T-cell (primary cell): ENCODE measurements at regions of chr3 and their contacts with region 1.

Region 1: GRCh38 chr3:51498876-51499738 is 708 bp downstream of the DCAF1 start:
- DNase-seq: peak; percentile 44 to 85 (median 59)
- ATAC-seq: peak; percentile 60 to 68 (median 62)
- H3K4me3 ChIP-seq: peak overlapping the region; percentile 72 to 96
- H3K4me3 Mint-ChIP-seq: peak overlapping the region; percentile 86 to 97 (median 94)
- H3K27ac ChIP-seq: peak overlapping the region; percentile 77
- H3K27ac Mint-ChIP-seq: peak overlapping the region; percentile 97 to 98
- H3K4me1 ChIP-seq: peaks cover 6 to 27% of the 10 kb centered on the region in 2 experiments
- H3K4me1 Mint-ChIP-seq: peaks cover 19 to 37% (median 29%) of the 10 kb centered on the region in 3 donors
- H3K27me3 ChIP-seq: no peaks in the 10 kb centered on the region
- H3K27me3 Mint-ChIP-seq: no peaks in the 10 kb centered on the region

Region 2: DNA sequence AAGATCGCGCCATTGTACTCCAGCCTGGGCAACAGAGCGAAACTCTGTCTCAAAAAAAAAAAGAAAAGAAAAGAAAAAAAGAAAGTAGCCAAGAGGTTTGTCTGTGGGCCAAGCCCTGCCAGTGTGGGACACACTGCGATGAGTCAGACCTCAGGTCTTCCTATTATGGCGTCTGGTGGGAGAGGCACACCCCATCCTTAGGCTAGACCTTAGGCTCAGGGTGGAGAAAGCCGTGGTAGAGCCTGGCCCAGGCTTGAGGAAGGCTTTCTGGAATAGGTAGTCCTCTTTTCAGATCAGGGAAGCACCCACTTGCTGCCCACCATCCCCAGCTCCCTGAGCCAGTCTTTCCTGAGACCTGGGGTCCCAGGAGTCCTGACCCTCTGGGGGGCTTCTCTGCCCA is 923.7 kb before region 1 on chr3:
- CTCF ChIA-PET with region 1: interaction called in 1 of 2 experiments, 6 read pairs
- POLR2A ChIA-PET with region 1: interaction called in 1 of 2 experiments, 17 read pairs
- DNase-seq: no peak
- ATAC-seq: no peak
- H3K4me3 ChIP-seq: no peak overlapping the region
- H3K4me3 Mint-ChIP-seq: peak overlapping the region in 1 of 3 donors; percentile 84
- H3K27ac ChIP-seq: peak overlapping the region; percentile 60
- H3K27ac Mint-ChIP-seq: peak overlapping the region; percentile 95 to 98
- H3K4me1 ChIP-seq: peaks cover 32 to 95% of the 10 kb centered on the region in 2 experiments
- H3K4me1 Mint-ChIP-seq: peaks cover 60 to 80% (median 75%) of the 10 kb centered on the region in 3 donors
- H3K27me3 ChIP-seq: no peaks in the 10 kb centered on the region
- H3K27me3 Mint-ChIP-seq: no peaks in the 10 kb centered on the region

Region 3: GRCh38 chr3:51384726-51385473 is 114.2 kb before region 1 on chr3 and contains the start of gene MANF:
- CTCF ChIA-PET with region 1: interaction called in 1 of 2 experiments, 24 read pairs
- POLR2A ChIA-PET with region 1: interaction called in 1 of 2 experiments, 15 read pairs
- DNase-seq: peak; percentile 90 to 99 (median 97)
- ATAC-seq: peak; percentile 95 to 97 (median 96)
- H3K4me3 ChIP-seq: peak within 1 kb of the TSS; percentile 93 to 96
- H3K4me3 Mint-ChIP-seq: peak within 1 kb of the TSS; percentile 98 to 99 (median 99)
- H3K27ac ChIP-seq: peak within 1 kb of the TSS; percentile 88
- H3K27ac Mint-ChIP-seq: peak within 1 kb of the TSS; percentile 99
- H3K4me1 ChIP-seq: peaks cover 20 to 46% of the 10 kb centered on the region in 2 experiments
- H3K4me1 Mint-ChIP-seq: peaks cover 47 to 56% (median 49%) of the 10 kb centered on the region in 3 donors
- H3K27me3 ChIP-seq: no peaks in the 10 kb centered on the region
- H3K27me3 Mint-ChIP-seq: no peaks in the 10 kb centered on the region
- total RNA-seq, gene MANF: 36.4 to 71.9 (median 56.7) TPM

Region 4: DNA sequence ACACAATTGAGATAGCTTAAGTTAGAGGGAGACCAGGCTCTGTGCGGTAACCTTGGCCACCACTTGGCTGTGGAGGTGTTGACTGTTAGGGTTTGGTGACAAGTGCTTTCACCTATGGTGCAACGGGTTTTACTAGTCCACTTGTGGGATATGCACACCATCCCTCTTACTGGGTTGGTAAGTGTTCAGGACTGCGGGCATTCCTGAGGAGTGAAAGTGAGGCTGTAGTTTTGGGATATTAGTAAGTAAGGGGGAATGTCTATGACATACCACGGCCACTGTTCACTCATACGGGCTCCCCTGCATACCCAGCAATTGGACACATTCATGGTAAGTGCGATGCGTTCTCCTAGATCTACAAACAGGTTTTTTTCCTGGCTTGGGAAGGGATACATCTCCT is 31.4 kb after region 1 on chr3:
- CTCF ChIA-PET with region 1: interaction called in 1 of 2 experiments, 7 read pairs
- POLR2A ChIA-PET with region 1: interaction called in 1 of 2 experiments, 11 read pairs
- DNase-seq: no peak
- ATAC-seq: no peak
- H3K4me3 ChIP-seq: no peak overlapping the region
- H3K4me3 Mint-ChIP-seq: no peak overlapping the region
- H3K27ac ChIP-seq: no peak overlapping the region
- H3K27ac Mint-ChIP-seq: no peak overlapping the region
- H3K4me1 ChIP-seq: no peaks in the 10 kb centered on the region
- H3K4me1 Mint-ChIP-seq: no peaks in the 10 kb centered on the region
- H3K27me3 ChIP-seq: peaks cover 0 to 17% of the 10 kb centered on the region in 2 experiments
- H3K27me3 Mint-ChIP-seq: peaks cover 8 to 11% of the 10 kb centered on the region in 2 donors

Region 5: DNA sequence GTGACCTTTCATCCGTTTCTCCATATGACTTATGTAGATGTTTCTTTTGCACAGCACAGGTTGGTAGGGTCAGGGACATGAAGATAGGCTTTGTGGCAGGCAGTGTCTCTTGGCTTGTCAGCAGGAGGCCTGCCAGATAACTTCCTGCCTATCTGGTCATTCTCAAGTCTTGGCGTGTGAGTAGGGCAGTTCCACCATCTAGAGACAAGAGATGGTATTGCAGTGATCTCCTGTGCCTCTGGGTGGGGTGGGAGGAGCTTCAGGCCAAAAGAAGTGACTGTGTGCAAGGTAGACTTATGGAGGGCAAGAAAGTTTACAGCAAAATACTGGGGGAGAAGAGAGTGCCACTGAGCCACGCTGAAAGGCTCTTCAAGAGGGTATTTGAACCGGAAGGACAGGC is 183.0 kb after region 1 on chr3:
- CTCF ChIA-PET with region 1: interaction called, 11 to 89 read pairs
- POLR2A ChIA-PET with region 1: interaction called, 3 to 9 read pairs
- DNase-seq: peak; percentile 45 to 91 (median 70)
- ATAC-seq: peak; percentile 69 to 79 (median 73)
- H3K4me3 ChIP-seq: peak overlapping the region; percentile 25 to 46
- H3K4me3 Mint-ChIP-seq: peak overlapping the region; percentile 55 to 92 (median 58)
- H3K27ac ChIP-seq: peak overlapping the region; percentile 58
- H3K27ac Mint-ChIP-seq: peak overlapping the region; percentile 78 to 79
- H3K4me1 ChIP-seq: peaks cover 67 to 99% of the 10 kb centered on the region in 2 experiments
- H3K4me1 Mint-ChIP-seq: peaks cover 94 to 97% (median 96%) of the 10 kb centered on the region in 3 donors
- H3K27me3 ChIP-seq: no peaks in the 10 kb centered on the region
- H3K27me3 Mint-ChIP-seq: no peaks in the 10 kb centered on the region